Activated T-helper 1 cell treated with anti-CD3 and anti-CD28 coated beads, Interleukin-12 subunit alpha, Interleukin-12 subunit beta, Interleukin-2, Interleukin-4 antibody, amounts not matched to agents 30 ng/mL and 10 ng/mL and 1 ng/mL, durations not matched to agents 14 hours and 24 hours and 36 hours (primary cell): ENCODE measurements at regions of chr1 and their contacts with region 1.

Region 1: GRCh38 chr1:155084722-155085503 is 6.3 kb downstream of the EFNA3 start:
- DNase-seq: peak; percentile 89
- H3K4me3 Mint-ChIP-seq: peak overlapping the region; percentile 88
- H3K27ac Mint-ChIP-seq: peak overlapping the region; percentile 94
- H3K4me1 Mint-ChIP-seq: peaks cover 34% of the 10 kb centered on the region
- H3K27me3 Mint-ChIP-seq: peaks cover 31% of the 10 kb centered on the region

Region 2: DNA sequence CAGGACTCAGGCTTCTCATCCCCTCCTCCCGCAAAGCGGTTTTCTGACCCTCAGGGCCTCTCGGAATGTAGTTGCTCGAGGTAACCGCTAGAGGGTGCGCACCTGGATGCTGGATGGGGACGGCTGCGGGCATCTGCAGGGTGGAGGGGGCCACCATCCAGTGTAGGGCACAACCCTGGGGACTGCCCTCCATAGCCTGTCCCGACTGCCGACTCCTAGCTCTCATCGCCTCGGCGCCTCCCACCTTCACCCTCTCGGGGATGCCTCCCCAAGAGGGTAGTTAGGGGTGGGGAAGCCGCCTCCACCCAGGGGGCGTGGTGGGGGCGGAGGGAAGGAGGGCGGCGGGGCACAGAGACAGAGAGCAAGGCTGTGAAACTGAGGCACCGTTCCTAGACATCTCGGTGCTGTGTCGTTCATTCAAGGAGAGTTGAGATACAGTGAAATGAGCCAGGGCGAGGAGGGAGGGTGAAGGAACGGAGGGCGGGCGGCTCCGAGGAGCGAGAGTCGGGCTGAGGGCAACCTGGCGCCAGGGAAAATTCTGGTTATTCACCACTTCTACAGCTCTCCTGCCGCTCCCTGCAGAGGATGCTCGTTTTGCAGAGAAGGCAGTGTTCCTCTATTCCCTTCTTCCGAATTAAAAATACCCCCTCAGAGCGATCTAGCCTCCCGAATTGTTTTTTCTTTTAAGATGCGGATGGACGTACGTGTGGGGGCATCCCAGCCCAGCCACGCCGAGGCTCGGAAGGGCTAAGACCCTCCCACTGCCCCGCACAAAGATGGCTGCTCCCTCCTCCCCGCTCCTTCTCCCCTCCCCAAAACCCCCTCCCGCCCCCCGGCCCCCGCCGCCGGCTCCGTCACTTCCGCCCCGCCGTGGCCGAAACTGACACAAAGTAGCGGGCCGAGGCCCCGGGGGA is 760.0 kb before region 1 on chr1 and contains the start of gene ATP8B2:
- intact Hi-C with region 1: loop called (anchors 10 kb)
- DNase-seq: peak; percentile 74
- H3K4me3 Mint-ChIP-seq: peak within 1 kb of the TSS; percentile 96
- H3K27ac Mint-ChIP-seq: peak within 1 kb of the TSS; percentile 89
- H3K4me1 Mint-ChIP-seq: peaks cover 35% of the 10 kb centered on the region
- H3K27me3 Mint-ChIP-seq: peaks cover 22% of the 10 kb centered on the region
- total RNA-seq, gene ATP8B2: 50.1 and 54.9 TPM in 2 replicates

Region 3: DNA sequence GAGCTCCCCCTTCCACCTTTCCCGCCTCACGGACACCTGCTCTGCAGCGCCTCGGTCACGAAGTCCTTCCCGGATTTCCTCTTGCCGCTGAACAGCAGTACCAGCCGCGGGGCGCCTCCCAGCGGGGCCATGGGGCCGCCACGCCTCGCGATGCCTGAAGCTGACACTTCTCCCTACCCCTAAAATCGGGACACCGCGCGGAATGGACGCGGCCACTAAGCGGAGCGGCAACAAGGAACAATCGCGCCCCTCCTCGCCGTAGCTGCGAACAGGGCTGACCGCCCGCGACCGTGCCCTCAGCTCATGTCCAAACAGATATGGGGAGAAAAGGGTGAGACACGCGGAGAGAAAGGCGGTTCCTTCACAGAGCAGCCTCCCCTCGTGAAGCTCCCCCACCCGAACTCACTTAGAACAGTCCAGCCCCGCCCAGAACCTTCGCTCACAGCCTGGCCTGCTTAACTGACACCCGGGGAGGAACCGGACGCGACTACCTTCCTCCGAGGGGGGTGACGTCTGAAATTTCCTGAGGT is 148.3 kb before region 1 on chr1 and contains the start of gene PMVK:
- intact Hi-C with region 1: loop called (anchors 1 kb)
- DNase-seq: peak; percentile 92
- H3K4me3 Mint-ChIP-seq: peak within 1 kb of the TSS; percentile 93
- H3K27ac Mint-ChIP-seq: peak within 1 kb of the TSS; percentile 95
- H3K4me1 Mint-ChIP-seq: peaks cover 53% of the 10 kb centered on the region
- H3K27me3 Mint-ChIP-seq: no peaks in the 10 kb centered on the region
- total RNA-seq, gene PMVK: 42.5 and 43.3 TPM in 2 replicates

Region 4: DNA sequence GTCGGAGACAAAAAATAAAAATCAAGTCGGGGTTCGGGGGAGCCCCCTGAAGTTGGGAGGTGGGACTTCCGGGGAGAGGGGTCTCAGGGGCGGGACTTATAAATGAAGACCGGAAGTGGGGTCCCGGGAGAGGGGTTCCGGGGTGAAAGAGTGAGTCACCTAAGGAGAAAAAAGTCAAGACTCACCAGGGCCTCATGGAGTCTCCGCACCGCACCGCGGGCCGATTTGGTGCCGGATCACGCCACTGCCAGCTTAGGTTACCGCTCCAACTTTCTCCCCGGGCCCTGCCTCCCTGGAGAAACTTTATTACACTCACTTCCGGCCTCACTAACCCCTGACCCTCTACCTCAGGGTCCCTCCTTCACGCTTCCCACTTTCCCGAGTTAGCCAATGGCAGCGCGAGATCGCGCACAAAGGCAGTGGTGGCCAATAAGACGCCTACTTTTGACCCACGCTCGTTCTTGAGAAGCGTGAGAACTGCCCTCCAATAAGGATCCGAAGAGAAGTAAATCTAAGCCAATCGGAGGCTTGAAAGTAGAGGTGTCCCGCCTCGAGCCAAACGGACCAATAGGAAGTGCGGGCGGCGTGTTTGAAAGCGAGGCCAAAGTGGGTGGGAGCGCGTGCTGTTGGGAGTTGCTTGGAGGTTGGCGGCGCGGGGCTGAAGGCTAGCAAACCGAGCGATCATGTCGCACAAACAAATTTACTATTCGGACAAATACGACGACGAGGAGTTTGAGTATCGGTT is 110.7 kb before region 1 on chr1 and contains the start of gene CKS1B:
- intact Hi-C with region 1: loop called (anchors 1 kb)
- DNase-seq: peak; percentile 95
- H3K4me3 Mint-ChIP-seq: no peak within 1 kb of the TSS
- H3K27ac Mint-ChIP-seq: no peak within 1 kb of the TSS
- H3K4me1 Mint-ChIP-seq: peaks cover 36% of the 10 kb centered on the region
- H3K27me3 Mint-ChIP-seq: no peaks in the 10 kb centered on the region
- total RNA-seq, gene CKS1B: 151 and 158 TPM in 2 replicates

Region 5: DNA sequence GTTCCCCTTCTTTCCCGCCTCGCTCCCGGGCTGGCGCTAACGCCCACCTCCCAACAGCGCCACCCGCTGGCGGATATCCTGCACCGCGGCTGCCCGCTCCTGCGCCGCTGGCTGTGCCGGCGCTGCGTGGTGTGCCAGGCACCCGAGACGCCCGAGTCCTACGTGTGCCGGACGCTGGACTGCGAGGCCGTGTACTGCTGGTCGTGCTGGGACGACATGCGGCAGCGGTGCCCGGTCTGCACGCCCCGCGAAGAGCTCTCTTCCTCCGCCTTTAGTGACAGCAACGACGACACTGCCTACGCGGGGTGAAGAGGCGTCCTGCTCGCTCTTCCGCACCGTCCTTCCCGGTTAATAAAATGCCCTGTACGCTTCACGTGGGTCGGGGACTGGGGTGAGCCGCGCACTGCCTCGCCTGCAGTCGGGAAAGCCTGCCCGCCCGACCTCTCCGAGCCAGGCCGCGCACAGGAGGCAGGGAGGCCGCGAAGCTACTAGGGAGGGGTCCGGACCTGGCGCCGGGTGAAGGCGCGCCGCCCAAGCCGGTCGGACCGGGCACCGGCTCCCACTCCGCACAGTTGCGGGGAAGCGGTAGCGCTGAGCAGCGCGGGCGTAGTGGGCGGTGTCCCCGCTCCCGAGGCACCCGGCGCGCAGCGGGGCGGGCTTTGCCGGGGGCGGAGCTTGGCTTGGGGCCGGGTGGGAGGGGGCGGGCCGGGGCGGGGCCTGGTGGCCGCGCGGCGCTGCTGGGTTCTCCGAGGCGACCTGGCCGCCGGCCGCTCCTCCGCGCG is 34.2 kb before region 1 on chr1 and contains the start of gene ADAM15:
- intact Hi-C with region 1: loop called (anchors 1 kb)
- DNase-seq: peak; percentile 79
- H3K4me3 Mint-ChIP-seq: peak within 1 kb of the TSS; percentile 88
- H3K27ac Mint-ChIP-seq: peak within 1 kb of the TSS; percentile 88
- H3K4me1 Mint-ChIP-seq: peaks cover 28% of the 10 kb centered on the region
- H3K27me3 Mint-ChIP-seq: no peaks in the 10 kb centered on the region
- total RNA-seq, gene ADAM15: 82.9 and 86.8 TPM in 2 replicates

Region 6: GRCh38 chr1:155167166-155168104 is 82.5 kb after region 1 on chr1:
- intact Hi-C with region 1: loop called (anchors 1 kb)
- DNase-seq: peak; percentile 77
- H3K4me3 Mint-ChIP-seq: peak overlapping the region; percentile 53
- H3K27ac Mint-ChIP-seq: peak overlapping the region; percentile 61
- H3K4me1 Mint-ChIP-seq: peaks cover 25% of the 10 kb centered on the region
- H3K27me3 Mint-ChIP-seq: peaks cover 8% of the 10 kb centered on the region